Breast epithelium (tissue), 4 donors: ENCODE measurements at regions of chr2 and their contacts with region 1.

Region 1: GRCh38 chr2:11539317-11540152 is 5.7 kb downstream of the GREB1 start:
- DNase-seq: peak; percentile 71 to 76
- H3K4me3 ChIP-seq: peak overlapping the region; percentile 4 to 41 (median 37)
- H3K27ac ChIP-seq: peak overlapping the region; percentile 54 to 60
- H3K4me1 ChIP-seq: no peaks in the 10 kb centered on the region
- H3K27me3 ChIP-seq: no peaks in the 10 kb centered on the region
- CTCF ChIP-seq: no peak
- POLR2A ChIP-seq: no peak

Region 2: DNA sequence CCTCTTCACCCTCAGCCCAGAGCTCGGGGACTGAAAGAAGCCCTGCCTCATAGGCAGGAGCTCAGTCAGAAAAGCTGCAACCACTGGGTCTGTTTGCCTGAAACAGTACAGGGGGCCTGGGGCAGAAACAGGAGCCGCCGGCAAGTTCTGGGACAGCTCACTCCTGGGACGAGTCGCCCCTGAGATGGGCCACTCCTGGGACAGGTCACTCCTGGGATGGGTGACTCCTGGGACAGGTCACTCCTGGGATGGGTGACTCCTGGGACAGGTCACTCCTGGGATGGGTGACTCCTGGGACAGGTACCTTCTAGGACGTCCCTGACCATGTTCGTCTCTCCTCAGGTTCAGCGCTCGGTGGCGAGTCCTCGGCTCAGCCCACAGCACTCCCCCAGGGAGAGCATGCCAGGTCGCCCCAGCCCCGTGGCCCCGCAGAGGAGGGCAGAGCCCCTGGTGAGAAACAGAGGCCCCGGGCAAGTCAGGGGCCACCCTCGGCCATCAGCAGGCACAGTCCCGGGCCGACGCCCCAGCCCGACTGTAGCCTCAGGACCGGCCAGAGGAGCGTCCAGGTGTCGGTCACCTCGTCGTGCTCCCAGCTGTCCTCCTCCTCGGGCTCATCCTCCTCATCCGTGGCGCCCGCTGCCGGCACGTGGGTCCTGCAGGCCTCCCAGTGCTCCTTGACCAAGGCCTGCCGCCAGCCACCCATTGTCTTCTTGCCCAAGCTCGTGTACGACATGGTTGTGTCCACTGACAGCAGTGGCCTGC is 78.6 kb after region 1 on chr2:
- intact Hi-C with region 1: loop called (anchors 10 kb)
- DNase-seq: no peak
- H3K4me3 ChIP-seq: no peak overlapping the region
- H3K27ac ChIP-seq: no peak overlapping the region
- H3K4me1 ChIP-seq: no peaks in the 10 kb centered on the region
- H3K27me3 ChIP-seq: no peaks in the 10 kb centered on the region
- CTCF ChIP-seq: no peak
- POLR2A ChIP-seq: no peak